Activated T-helper 1 cell treated with anti-CD3 and anti-CD28 coated beads, Interleukin-12 subunit alpha, Interleukin-12 subunit beta, Interleukin-2, Interleukin-4 antibody, amounts not matched to agents 30 ng/mL and 10 ng/mL and 1 ng/mL, durations not matched to agents 14 hours and 24 hours and 36 hours (primary cell): ENCODE measurements at regions of chr6 and their contacts with region 1.

Region 1: DNA sequence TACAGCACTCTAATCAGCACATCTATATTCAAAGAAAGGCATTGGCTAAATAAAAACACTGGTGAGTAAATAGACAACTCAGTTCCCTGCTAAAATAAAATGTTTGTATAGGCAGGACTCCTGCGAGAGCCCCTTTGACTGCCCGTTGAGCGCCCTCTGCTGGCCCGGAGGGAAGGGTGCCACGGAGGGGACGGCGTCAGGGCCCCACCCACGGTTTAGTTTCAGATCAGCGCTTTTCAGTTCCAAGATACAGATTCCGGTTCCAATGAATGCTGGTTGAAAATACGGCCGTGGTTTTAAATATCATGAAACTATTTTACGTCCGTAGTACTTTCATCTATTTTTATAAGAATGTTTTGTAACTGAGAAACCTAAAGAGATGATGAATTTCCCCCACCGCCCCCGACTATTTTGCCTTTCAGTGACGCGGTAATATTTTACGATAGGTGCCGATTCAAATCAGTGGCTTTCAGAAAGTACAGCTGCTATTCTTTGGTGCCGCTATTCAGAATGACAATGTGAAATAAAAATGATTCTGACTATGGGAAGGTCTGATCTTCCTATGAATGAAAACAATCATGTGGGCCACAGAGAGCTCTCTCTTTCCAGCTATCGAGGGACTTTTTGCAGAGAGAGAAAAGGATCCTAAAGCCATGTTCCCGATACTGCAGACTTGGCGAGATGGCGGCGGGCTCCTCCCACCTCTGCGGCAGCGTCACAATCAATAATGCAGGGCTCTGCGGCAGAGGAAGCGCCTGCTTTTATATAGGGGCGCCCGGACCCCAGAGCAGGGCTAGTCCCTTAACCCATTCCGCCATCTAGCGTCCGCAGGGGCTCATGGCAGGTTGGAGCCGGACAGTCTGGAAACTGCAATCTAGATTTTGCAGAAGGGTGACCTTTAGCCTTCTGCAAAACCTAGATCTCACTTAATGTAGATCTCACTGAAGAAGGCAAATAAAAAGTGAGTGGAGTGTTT is 10.6 kb upstream of the CCN6 start:
- DNase-seq: peak; percentile 83
- H3K4me3 Mint-ChIP-seq: peak overlapping the region; percentile 92
- H3K27ac Mint-ChIP-seq: peak overlapping the region; percentile 92
- H3K4me1 Mint-ChIP-seq: peaks cover 42% of the 10 kb centered on the region
- H3K27me3 Mint-ChIP-seq: no peaks in the 10 kb centered on the region

Region 2: DNA sequence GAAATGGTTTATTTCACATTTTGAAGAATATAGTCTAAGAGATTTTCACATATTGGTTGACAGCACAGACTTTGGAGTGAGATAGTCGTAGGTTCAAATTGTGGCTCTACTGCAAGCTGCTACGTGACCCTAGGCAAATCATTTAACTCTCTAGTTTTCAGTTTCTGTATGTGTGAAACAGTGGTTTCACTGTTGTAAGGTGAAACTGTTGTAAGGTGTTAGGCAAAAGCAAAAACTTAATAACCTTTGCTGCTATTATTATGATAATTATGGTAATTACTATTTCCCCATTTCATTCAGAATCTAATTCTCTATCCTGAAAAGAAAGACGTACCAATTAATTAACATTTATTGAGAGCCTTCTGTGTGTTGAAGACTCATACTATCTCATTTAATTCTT is 704.5 kb before region 1 on chr6:
- intact Hi-C with region 1: loop called (anchors 10 kb)
- DNase-seq: no peak
- H3K4me3 Mint-ChIP-seq: no peak overlapping the region
- H3K27ac Mint-ChIP-seq: peak overlapping the region; percentile 15
- H3K4me1 Mint-ChIP-seq: peaks cover 12% of the 10 kb centered on the region
- H3K27me3 Mint-ChIP-seq: no peaks in the 10 kb centered on the region

Region 3: DNA sequence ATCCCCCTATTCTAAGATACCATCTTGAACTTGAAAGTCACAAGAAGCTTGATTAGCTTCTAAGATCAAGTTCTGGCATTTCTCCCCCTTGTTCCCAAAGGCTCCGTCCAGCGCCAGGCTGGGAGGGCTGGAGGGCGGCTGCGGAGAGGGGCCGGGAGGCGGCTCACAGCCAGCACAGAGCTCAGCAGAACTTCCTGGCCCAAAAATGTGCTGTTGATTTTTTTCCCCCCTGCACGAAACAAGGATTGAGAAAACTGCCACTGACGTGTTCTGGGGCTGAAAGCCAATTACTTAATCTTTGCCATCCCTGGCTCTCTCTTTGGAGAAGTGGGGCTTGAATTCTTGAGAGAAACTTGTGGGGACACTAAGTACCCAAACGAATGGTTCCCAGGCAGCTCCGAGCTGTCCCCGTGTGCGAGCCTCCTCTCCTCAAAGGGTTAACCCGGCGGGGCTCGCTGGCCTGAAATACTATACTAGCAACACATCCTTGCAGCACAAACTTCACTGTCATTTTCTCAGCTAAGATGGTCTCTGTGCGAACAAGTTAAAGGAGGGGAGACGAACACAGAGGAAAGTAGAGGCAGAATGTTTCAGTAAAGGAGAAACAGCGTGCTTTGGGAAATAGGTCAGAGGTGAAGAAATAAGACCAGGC is 438.1 kb before region 1 on chr6:
- intact Hi-C with region 1: loop called (anchors 1 kb)
- DNase-seq: peak; percentile 11
- H3K4me3 Mint-ChIP-seq: peak overlapping the region; percentile 90
- H3K27ac Mint-ChIP-seq: peak overlapping the region; percentile 100
- H3K4me1 Mint-ChIP-seq: peaks cover 56% of the 10 kb centered on the region
- H3K27me3 Mint-ChIP-seq: no peaks in the 10 kb centered on the region

Region 4: GRCh38 chr6:111837641-111838500 is 205.4 kb before region 1 on chr6:
- intact Hi-C with region 1: loop called (anchors 1 kb)
- DNase-seq: peak; percentile 60
- H3K4me3 Mint-ChIP-seq: peak overlapping the region; percentile 70
- H3K27ac Mint-ChIP-seq: peak overlapping the region; percentile 94
- H3K4me1 Mint-ChIP-seq: peaks cover 61% of the 10 kb centered on the region
- H3K27me3 Mint-ChIP-seq: no peaks in the 10 kb centered on the region

Region 5: DNA sequence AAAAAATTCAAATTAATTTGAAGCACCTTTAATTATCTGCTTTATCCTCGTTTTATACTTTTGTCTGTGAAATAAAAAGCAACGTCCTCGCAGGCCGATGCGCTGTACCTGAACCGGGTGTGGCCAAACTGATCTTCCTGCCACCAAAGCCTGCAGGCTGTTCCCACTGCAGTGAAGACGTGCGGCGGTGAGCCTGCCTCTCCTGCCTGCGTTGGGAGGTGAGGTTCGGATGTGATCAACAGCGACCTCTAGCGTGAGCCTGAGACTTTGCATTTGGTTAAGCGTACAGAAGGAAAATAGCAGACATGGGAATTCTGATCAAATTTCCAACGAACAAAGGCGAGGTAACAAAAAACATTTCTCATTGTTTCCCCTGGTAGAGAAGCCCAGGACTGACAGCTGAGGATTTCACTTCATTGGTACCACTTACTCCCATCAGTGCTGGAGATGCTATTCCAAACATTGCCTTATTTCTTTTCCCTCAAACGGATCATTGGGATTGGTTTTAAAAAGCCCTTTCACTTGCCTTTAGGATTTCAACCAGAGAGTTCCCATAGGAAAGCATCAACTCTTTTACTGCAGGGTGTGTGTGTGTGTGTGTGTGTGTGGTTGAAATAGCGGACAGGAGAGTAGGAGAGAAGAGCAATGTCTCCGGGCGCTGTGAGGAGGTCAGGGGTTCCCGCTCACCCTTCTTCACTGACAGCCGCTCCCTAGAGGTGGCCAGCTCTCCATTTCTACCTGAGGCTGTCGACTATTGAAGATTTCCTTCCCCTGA is 46.1 kb before region 1 on chr6:
- intact Hi-C with region 1: loop called (anchors 1 kb)
- DNase-seq: peak; percentile 68
- H3K4me3 Mint-ChIP-seq: peak overlapping the region; percentile 45
- H3K27ac Mint-ChIP-seq: peak overlapping the region; percentile 46
- H3K4me1 Mint-ChIP-seq: peaks cover 46% of the 10 kb centered on the region
- H3K27me3 Mint-ChIP-seq: no peaks in the 10 kb centered on the region

Region 6: GRCh38 chr6:112087136-112087911 is 44.0 kb after region 1 on chr6 and contains the starts of genes FAM229B and TUBE1:
- intact Hi-C with region 1: loop called (anchors 2 kb)
- DNase-seq: peak; percentile 86
- H3K4me3 Mint-ChIP-seq: no peak within 1 kb of the TSS
- H3K27ac Mint-ChIP-seq: no peak within 1 kb of the TSS
- H3K4me1 Mint-ChIP-seq: no peaks in the 10 kb centered on the region
- H3K27me3 Mint-ChIP-seq: peaks cover 14% of the 10 kb centered on the region
- total RNA-seq, gene FAM229B: 1.1 and 2.2 TPM in 2 replicates
- total RNA-seq, gene TUBE1: 24.4 and 26.2 TPM in 2 replicates